PC-9 (cell line): ENCODE measurements at regions of chr14 and their contacts with region 1.

Region 1: DNA sequence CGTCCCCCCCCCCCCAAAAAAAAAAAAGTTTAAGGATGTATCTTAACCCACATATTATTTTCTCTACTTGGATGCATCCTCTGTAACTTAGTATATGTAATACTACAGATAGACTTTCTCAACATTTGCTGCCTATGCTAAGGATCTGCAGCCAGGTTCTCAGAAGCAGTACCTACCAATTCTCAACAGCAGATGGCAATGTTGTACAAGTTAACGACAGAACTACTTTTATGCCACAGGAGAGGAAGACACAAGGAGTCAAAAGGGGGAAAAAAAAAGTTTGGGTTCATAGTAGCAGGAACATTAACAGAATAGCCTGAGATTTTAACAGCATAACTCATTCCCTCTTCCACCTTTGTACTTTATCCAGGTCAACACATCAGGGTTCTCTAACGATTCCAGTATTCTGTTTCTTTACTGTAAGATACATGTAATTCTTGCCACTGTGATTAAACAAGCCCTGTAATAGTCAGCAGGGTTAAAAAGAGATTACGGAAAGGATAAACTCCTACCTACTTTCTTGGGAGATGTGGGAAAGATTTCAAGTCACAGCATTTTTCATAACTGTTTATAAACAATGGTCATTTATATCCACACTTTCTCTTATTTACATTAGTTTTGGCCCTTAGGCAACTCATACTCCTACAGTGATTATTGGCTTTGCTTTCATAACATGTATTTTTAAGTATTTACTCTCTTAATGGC is 5.7 kb upstream of the NEK9 start:
- DNase-seq: peak; percentile 79 to 87
- H3K4me3 ChIP-seq: no peak overlapping the region
- H3K27ac ChIP-seq: peak overlapping the region; percentile 33
- H3K4me1 ChIP-seq: peaks cover 29% of the 10 kb centered on the region
- H3K27me3 ChIP-seq: no peaks in the 10 kb centered on the region
- CTCF ChIP-seq: peak; percentile 96

Region 2: GRCh38 chr14:75176142-75176820 is 43.7 kb after region 1 on chr14 and contains the start of gene TMED10:
- CTCF ChIA-PET with region 1: interaction called, 18 read pairs
- POLR2A ChIA-PET with region 1: interaction called, 3 read pairs
- intact Hi-C with region 1: no loop called
- DNase-seq: peak; percentile 84 to 96
- H3K4me3 ChIP-seq: peak within 1 kb of the TSS; percentile 80
- H3K27ac ChIP-seq: peak within 1 kb of the TSS; percentile 94
- H3K4me1 ChIP-seq: peaks cover 26% of the 10 kb centered on the region
- H3K27me3 ChIP-seq: no peaks in the 10 kb centered on the region
- CTCF ChIP-seq: no peak
- total RNA-seq, gene TMED10: 709 and 770 TPM in 2 replicates

Region 3: DNA sequence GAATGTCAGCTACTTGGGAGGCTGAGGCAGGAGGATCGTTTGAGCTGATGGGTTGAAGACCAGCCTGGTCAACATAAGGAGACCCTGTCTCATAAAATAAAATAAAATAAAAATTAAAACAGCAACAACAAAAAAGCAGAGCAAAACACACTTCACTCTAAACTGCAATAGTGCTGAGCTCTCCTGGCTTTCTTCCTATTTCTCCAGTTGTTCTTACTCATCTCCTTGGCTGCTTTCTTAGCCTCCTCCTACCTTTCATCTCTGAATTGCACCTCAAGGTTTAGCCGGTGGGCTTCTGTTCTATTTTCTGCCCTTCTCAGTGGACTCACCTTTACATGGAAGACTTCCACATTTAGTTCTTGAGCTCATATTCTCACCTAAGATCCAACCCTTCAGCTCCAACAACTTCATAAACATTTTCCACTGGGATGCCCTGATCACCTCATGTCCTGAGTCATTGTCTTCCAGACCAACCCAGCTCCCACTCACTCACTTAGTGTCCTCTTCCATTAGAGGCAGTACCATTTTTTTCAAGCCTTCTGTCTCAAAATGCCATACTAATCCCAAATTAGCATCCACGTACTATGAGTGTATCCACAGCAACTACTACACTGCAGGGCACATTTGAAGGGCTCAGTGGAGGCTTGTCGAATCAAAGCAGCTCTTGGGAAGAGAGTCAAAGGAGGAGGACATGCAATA is 85.1 kb after region 1 on chr14:
- CTCF ChIA-PET with region 1: no interaction called
- POLR2A ChIA-PET with region 1: interaction called, 44 read pairs
- intact Hi-C with region 1: no loop called
- DNase-seq: no peak
- H3K4me3 ChIP-seq: no peak overlapping the region
- H3K27ac ChIP-seq: no peak overlapping the region
- H3K4me1 ChIP-seq: peaks cover 17% of the 10 kb centered on the region
- H3K27me3 ChIP-seq: no peaks in the 10 kb centered on the region
- CTCF ChIP-seq: no peak

Region 4: DNA sequence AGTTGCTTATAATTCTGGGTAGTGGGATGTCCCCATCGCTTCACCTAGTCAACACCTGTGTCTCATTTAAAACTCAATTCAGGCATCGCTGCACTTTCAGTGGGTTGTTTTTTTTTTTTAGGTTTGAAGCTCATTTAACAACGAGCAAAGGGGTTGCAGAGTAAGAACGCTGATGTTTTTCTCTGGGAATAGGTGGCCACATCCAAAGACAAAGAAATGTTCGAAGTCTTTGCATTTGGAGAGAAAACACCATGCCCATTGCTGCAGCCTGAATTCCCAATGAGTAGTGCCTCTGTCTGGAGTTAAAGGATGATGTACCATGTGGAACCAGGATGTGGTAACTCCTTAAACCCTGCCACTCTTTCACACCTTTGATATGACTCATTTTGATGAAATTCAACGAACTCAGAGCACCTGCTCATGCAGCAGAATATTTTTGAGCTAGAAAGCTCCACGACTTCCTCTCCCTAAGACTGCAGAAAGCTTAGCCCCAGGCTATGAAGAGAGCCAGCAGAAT is 354.7 kb after region 1 on chr14:
- CTCF ChIA-PET with region 1: no interaction called
- POLR2A ChIA-PET with region 1: no interaction called
- intact Hi-C with region 1: loop called (anchors 2 kb)
- DNase-seq: peak; percentile 83 to 99
- H3K4me3 ChIP-seq: no peak overlapping the region
- H3K27ac ChIP-seq: 0 out of 2 replicates have a peak overlapping the region, but pooled peaks have one; percentile 5
- H3K4me1 ChIP-seq: peaks cover 18% of the 10 kb centered on the region
- H3K27me3 ChIP-seq: no peaks in the 10 kb centered on the region
- CTCF ChIP-seq: no peak

Region 5: DNA sequence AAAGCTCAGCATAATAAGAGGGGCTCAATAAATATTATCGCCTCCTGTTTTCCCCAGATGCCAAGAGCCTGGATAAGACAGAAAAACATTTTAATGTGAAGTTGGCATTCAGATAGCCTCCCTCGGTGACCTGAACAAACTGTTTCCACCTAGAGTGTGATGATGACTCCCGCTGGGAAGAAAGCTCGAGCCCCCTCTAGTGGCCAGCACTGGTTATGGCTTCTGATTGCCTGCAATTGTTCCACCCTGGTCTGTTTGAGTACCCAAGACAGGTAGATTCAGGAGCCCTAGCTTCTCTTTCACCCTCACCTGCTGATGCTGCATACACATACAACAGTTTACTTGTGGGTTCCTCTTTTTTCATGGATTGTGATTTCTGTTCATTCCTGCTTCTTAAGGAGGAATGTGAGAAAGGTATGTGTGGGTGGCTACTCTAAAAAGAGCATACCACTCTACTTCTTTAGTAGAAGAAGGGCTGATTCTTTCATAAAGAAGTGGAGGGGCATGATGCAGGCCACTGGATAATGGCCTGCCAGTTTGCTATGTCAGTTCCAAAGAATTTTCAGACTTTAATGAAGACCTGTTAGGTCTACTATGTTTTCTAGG is 521.7 kb after region 1 on chr14:
- CTCF ChIA-PET with region 1: no interaction called
- POLR2A ChIA-PET with region 1: no interaction called
- intact Hi-C with region 1: loop called (anchors 5 kb)
- DNase-seq: peak; percentile 58 to 81
- H3K4me3 ChIP-seq: no peak overlapping the region
- H3K27ac ChIP-seq: no peak overlapping the region
- H3K4me1 ChIP-seq: peaks cover 6% of the 10 kb centered on the region
- H3K27me3 ChIP-seq: no peaks in the 10 kb centered on the region
- CTCF ChIP-seq: peak; percentile 95

Region 6: DNA sequence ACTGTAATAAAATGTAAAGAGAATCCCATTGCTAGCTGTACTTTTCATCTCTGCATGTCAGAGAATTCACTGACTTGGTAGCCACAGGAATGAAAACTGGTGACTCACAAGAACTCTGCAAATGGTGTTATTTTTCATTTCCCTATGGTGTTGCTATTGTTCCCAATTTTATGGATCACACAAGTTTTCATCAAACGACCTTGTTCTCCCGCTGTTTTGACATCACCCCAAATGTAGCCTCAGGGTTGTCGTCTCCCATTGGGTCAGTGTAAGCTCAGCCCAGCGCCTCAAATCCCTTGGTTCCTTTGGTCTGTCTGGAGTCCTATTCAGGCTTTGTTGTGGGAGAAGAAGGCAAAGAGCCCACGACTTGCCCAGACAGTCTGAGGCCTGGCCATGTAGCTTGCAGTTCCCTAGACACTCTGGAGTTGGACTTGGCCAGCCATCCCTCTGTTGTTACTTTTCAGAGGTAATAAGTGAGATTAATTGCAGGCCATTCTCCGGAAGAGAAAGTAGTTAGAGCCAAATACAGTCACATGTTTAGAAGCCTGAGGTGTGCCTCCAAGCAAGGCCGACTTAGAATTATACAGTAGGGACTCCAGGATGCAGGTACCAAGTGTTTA is 690.1 kb after region 1 on chr14:
- CTCF ChIA-PET with region 1: no interaction called
- POLR2A ChIA-PET with region 1: no interaction called
- intact Hi-C with region 1: no loop called
- DNase-seq: peak; percentile 47 to 92
- H3K4me3 ChIP-seq: no peak overlapping the region
- H3K27ac ChIP-seq: peak overlapping the region; percentile 65
- H3K4me1 ChIP-seq: peaks cover 26% of the 10 kb centered on the region
- H3K27me3 ChIP-seq: no peaks in the 10 kb centered on the region
- CTCF ChIP-seq: no peak